Naive thymus-derived CD4-positive, alpha-beta T cell (primary cell): ENCODE measurements at regions of chr2 and their contacts with region 1.

Region 1: DNA sequence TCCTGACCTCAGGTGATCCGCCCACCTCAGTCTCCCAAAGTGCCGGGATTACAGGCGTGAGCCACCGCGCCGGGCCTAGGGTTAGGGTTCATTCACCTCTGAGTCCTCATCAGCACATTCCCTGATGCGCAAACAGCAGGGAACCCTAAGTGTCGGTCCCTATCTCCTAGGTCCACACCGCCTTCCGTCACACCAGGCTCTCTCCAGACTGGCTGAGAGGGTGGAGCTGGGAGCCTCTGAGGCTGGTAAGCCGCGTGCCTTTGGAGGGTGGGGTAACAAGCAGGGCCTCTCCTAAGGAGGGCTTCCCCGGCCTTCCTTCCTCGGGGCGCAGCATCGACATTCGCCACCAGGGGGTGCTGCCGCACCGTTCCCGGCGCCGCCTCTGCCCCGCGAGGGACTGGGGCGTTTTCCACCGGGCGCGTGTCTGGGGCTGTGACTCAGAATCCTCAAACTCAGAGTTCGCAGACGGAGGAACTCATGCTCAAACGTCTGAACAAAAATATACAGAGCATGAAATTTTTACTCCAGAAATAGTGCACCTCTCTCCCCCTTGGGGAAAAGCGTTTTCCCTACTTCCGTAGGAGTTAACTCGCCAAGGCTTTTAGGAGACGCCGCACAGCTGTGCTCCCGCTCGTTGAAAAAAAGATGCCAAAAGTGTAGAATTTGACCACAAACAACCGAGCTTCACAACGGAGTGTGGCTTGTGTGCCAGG is 63.9 kb upstream of the ASAP2 start:
- DNase-seq: peak; percentile 32 to 90 (median 69)
- ATAC-seq: peak; percentile 94
- H3K4me3 ChIP-seq: no peak overlapping the region
- H3K4me3 Mint-ChIP-seq: peak overlapping the region in 7 of 10 donors; percentile 12 to 57 (median 36)
- H3K27ac ChIP-seq: no peak overlapping the region
- H3K27ac Mint-ChIP-seq: no peak overlapping the region
- H3K4me1 ChIP-seq: no peaks in the 10 kb centered on the region
- H3K4me1 Mint-ChIP-seq: peaks cover 0 to 5% (median 0%) of the 10 kb centered on the region in 7 donors
- H3K27me3 ChIP-seq: no peaks in the 10 kb centered on the region
- H3K27me3 Mint-ChIP-seq: peaks cover 1 to 27% (median 14%) of the 10 kb centered on the region in 5 donors

Region 2: DNA sequence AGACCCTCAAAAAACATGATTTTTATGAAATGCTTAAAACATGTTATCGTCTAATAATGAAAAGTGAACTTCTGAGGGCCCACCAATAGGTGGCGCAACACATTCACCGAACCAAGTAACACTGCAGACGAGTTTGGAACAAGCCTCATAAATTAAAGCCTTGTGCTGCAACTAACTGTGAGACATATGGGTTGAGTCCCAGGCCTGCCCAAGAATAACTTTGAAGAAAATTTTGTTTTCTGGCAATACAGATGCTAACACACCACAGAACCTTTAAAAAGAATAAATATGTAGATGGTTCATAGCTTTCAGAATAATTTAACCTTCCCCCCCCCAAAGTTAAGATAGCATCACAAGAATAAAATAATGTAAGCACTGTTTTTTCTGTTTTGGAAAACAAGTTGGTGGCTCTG is 1939.6 kb before region 1 on chr2:
- CTCF ChIA-PET with region 1: no interaction called
- POLR2A ChIA-PET with region 1: no interaction called
- intact Hi-C with region 1: loop called in 1 of 2 experiments (anchors 5 kb)
- DNase-seq: peak; percentile 31 to 65 (median 55)
- ATAC-seq: peak; percentile 81
- H3K4me3 ChIP-seq: no peak overlapping the region
- H3K4me3 Mint-ChIP-seq: no peak overlapping the region
- H3K27ac ChIP-seq: no peak overlapping the region
- H3K27ac Mint-ChIP-seq: no peak overlapping the region
- H3K4me1 ChIP-seq: no peaks in the 10 kb centered on the region
- H3K4me1 Mint-ChIP-seq: peaks cover 0 to 6% (median 0%) of the 10 kb centered on the region in 7 donors
- H3K27me3 ChIP-seq: no peaks in the 10 kb centered on the region
- H3K27me3 Mint-ChIP-seq: no peaks in the 10 kb centered on the region

Region 3: DNA sequence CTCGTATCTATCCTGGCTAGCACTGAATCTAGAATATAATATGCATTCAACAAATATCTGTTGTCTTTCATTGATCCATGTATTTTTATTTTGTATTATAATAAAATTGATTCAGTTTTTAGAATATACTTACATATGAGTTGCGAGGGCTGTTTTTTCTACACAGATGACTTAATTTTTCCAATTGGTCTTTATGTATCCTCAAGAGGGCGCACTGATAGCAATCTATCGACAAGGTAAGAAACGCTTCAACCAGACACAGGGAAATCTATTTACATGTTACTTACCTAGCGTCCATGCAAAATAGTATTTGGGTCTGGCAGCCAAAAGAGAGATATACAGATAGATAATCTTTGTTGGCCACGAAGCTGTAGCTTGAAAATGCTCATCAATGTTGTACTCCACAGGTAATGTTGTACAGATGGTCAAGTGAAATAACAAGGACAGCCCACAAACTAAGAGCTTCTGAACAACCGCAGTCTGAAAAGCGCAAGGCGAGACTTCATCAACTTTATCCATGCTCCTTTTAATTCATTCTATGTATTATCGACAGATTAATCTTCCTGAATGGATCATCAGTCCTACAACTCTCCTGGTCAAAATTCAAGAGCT is 269.8 kb before region 1 on chr2:
- CTCF ChIA-PET with region 1: interaction called, 4 read pairs
- POLR2A ChIA-PET with region 1: no interaction called
- intact Hi-C with region 1: loop called in 1 of 2 experiments (anchors 1 kb)
- DNase-seq: peak in 4 of 9 donors; percentile 4 to 23 (median 12)
- ATAC-seq: peak; percentile 40
- H3K4me3 ChIP-seq: no peak overlapping the region
- H3K4me3 Mint-ChIP-seq: no peak overlapping the region
- H3K27ac ChIP-seq: no peak overlapping the region
- H3K27ac Mint-ChIP-seq: no peak overlapping the region
- H3K4me1 ChIP-seq: no peaks in the 10 kb centered on the region
- H3K4me1 Mint-ChIP-seq: no peaks in the 10 kb centered on the region
- H3K27me3 ChIP-seq: no peaks in the 10 kb centered on the region
- H3K27me3 Mint-ChIP-seq: peaks cover 0 to 6% (median 4%) of the 10 kb centered on the region in 5 donors

Region 4: DNA sequence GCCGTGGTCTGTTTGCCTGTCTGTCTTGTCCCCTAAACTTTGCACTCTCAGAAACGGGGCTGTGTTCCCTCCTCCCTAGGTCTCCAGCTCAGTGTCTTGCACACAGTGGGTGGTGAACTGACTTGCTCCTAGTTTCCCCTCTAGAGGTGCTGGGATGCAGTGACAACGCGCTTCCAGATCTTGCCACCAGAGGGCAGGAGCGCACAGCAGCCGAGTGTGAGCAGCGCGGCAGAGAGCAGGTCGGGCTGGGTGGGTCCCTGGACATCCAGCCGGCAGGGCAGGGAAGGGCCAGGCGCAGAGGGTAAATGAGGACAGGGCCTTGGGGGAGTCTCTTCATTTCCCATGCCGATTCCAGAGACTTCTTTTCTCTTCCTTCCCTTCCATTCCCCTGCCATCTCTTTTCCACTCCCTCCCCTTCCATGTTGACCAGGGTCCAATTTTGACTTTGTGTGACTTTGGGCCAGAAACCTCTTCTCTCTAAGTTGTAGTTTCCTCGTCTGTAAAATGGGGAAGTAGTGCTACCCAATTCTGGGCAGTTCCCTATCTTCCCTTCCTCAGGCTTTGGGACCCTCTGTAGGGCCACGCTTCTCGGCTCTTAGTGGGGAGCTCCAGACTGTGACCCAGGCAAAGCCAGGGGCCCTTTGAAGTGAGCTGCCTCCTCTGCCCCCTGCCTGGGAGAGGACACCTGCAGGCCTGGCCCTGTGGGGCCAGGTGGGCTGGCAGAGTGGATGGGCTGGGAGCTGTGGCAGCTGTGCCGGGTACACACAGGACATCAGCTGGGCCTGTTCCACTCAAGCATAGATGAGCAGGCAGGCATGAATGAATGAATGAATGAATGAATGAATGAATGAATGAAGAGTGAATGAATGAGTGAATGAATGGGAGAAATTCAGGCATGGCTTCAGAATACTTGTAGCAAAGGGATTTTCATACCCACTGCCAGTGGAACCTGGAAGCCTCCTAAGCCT is 657.2 kb after region 1 on chr2:
- CTCF ChIA-PET with region 1: no interaction called
- POLR2A ChIA-PET with region 1: no interaction called
- intact Hi-C with region 1: loop called in 1 of 2 experiments (anchors 1 kb)
- DNase-seq: peak; percentile 55 to 89 (median 76)
- ATAC-seq: peak; percentile 91
- H3K4me3 ChIP-seq: peak overlapping the region; percentile 10
- H3K4me3 Mint-ChIP-seq: peak overlapping the region; percentile 4 to 89 (median 60)
- H3K27ac ChIP-seq: no peak overlapping the region
- H3K27ac Mint-ChIP-seq: peak overlapping the region in 5 of 9 donors; percentile 7 to 85 (median 28)
- H3K4me1 ChIP-seq: peaks cover 9 to 12% of the 10 kb centered on the region in 2 donors
- H3K4me1 Mint-ChIP-seq: peaks cover 11 to 29% (median 14%) of the 10 kb centered on the region in 7 donors
- H3K27me3 ChIP-seq: no peaks in the 10 kb centered on the region
- H3K27me3 Mint-ChIP-seq: peaks cover 0 to 10% (median 0%) of the 10 kb centered on the region in 5 donors